Heart left ventricle (tissue), 16 donors: ENCODE measurements at regions of chr12 and their contacts with region 1.

Region 1: DNA sequence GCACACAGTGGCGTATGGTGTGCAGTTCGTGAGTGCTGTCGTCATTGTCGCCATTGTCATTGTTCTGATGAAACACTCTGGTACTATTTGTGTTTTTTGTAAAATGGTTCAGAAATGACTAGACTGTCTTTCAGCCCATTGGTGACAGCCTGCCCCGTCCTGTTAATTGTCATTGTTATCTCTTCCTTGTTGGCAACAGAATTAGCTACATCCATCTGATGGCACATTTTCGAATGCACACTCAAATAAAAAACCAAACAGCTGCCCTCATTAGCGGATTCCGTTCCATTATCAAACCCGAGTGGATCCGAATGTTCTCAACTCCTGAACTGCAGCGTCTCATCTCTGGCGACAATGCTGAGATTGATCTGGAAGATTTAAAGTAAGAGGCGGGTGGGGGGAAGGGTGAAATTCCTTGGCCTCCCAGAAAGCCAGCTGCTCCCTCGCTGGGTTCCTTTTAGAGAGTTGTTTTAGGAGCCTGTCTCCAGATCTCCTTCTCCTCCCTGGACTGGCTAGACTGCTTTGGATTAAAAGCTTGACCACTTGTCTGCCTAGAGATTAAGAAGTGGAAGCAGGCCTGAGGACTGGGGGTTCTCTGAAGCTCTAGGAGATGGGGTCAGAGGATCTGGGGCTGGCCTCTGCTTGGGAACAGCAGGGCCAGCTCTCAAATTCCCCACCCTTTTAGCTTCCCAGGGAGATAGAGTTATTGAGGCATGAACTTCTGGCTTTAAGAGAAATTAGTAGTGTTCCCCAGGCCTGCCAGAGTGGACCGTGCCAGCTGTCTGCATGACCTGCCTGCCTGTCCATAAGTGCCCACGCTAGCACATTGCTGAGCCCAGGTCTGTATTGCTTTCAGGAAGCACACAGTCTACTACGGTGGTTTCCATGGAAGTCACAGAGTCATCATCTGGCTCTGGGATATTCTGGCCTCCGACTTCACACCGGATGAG is 43.3 kb downstream of the MMAB start:
- DNase-seq: peak in 1 of 5 donors; percentile 31
- ATAC-seq: no peak
- H3K4me3 ChIP-seq: no peak overlapping the region
- H3K27ac ChIP-seq: no peak overlapping the region
- H3K4me1 ChIP-seq: no peaks in the 10 kb centered on the region
- H3K27me3 ChIP-seq: no peaks in the 10 kb centered on the region
- CTCF ChIP-seq: no peak
- POLR2A ChIP-seq: no peak

Region 2: DNA sequence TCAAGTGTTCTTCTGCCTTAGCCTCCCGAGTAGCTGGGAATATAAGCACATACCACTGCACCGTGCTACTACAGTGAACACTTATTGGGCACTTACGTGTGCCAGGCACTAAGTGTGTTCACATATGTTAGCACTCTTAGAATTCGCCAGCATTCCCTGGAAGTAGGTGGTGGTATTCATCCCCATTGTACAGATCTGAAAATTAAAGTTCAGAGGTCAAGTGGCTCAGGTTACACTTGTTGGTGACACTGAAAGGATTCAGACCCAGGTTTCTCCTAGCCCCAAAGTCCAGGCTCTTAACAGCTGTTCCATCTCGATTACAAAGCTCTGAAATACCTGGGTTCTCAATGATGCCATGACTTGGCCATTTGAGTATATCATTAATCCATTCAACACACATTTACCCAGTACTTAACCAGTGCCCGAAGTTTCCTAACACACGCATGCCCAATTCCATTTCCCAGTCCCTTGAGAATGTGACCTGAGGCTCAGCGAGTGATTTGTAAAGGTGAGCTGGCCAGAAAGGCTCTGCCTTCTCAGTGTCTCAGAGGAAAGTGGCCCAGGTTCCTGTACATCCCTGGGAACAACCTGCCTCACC is 48.5 kb after region 1 on chr12:
- intact Hi-C with region 1: loop called in 1 of 10 experiments (anchors 5 kb)
- DNase-seq: no peak
- ATAC-seq: no peak
- H3K4me3 ChIP-seq: no peak overlapping the region
- H3K27ac ChIP-seq: no peak overlapping the region
- H3K4me1 ChIP-seq: peaks cover 0 to 13% (median 9%) of the 10 kb centered on the region in 12 donors
- H3K27me3 ChIP-seq: no peaks in the 10 kb centered on the region
- CTCF ChIP-seq: no peak
- POLR2A ChIP-seq: no peak